WTC11 (cell line): ENCODE measurements at regions of chr18 and their contacts with region 1.

Region 1: DNA sequence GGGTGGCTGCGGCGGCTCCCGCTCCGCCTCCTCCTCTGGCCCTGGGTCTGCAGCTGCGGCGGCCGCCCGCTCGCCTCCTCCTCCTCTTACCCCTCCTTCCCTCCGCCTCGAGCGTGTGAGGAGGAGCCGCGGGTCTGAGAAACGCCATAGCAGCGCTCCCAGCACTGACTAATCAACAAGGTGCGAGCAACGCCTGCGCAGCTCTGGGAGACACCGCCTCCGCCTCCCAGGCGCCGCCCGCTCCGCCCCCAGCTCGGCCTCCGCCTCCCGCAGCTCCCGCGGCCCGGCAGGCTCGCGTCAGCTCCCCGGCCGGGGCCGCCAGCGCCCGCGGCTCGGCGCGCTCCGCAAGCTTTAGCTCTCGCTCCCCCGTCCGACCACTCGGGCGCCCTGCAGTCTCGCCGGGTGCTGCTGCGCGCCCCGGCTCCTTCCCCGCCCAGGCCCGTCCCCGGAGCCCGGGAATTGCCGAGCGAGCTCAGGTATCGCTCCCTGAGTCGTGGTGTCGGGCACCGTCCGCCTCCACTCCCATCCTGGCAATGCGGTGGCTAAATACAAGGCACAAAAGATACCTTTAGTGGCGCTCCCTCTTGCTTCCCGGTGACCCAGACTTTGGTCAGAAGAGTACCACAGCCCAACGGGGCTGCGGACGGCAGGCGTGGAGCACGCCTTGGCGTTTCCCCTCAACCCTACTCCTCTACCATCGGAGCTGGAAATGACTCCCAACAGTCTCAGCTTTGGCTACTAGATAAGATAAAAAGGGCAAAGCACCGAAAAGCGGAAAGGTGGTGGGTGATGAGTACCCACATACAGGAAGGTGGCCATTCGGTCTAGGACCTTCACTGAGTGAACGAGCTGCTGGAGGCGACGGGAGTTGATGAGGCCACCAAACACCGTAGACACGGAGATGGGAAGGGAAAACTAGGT is at the start of gene GAREM1:
- DNase-seq: peak; percentile 91
- ATAC-seq: peak; percentile 89
- H3K4me3 Mint-ChIP-seq: peak within 1 kb of the TSS; percentile 93
- H3K27ac Mint-ChIP-seq: peak within 1 kb of the TSS; percentile 89
- H3K4me1 Mint-ChIP-seq: peaks cover 30% of the 10 kb centered on the region
- H3K27me3 Mint-ChIP-seq: peaks cover 29% of the 10 kb centered on the region
- CTCF ChIP-seq: no peak
- total RNA-seq, gene GAREM1: 7.0 to 7.7 TPM (median 7.4 TPM) in 3 replicates

Region 2: DNA sequence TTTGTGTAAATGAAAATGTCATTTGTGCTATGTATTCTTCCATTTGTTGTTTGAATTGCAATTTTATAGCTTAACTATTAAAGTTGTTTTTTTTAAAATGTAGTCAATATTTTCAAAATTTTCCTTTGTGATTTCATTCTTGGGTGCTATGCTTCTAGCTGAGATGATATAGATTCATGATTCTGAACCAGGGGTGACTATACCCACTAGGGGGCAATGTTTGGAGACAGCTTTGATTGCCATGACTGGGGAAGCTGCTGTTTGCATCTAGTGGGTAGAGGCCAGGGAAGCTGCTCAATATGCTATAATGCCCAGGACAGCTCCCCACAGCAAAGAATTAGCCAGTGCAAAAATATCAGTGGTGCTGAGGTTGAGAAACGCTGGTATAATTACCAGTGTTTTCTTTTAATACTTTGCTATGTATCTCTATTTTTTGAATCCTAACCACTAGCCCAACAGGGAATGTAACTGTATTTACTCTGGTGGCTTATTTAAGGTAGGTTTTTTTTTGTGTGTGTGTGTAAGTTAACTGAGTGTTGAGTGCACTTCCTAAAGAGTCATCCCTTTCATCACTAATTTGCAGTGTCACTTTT is 181.4 kb before region 1 on chr18:
- CTCF ChIA-PET with region 1: interaction called, 60 read pairs
- POLR2A ChIA-PET with region 1: interaction called, 7 read pairs
- DNase-seq: peak; percentile 59
- ATAC-seq: peak; percentile 89
- H3K4me3 Mint-ChIP-seq: no peak overlapping the region
- H3K27ac Mint-ChIP-seq: no peak overlapping the region
- H3K4me1 Mint-ChIP-seq: peaks cover 8% of the 10 kb centered on the region
- H3K27me3 Mint-ChIP-seq: no peaks in the 10 kb centered on the region
- CTCF ChIP-seq: peak; percentile 49; the same call in 1 of the 2 replicates

Region 3: DNA sequence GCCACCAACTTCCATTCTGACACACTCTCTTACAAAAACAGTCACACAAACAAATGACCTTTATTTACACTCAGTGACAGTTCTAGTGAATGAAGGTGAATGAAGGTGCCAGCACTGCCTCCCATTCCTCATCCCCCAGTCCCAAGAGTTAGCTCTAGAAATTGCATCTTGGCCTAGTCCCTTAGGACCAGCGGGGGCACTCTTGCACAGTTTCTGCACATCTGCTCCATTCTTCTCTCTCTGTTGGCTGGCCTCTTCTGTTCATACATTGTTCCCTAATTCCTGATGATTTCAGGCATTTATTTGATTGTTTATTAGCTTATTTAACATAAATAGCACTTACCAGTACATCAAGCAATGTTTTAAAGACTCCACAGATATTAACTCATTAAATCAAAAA is 31.2 kb before region 1 on chr18:
- CTCF ChIA-PET with region 1: interaction called, 22 read pairs
- POLR2A ChIA-PET with region 1: interaction called, 6 read pairs
- DNase-seq: peak; percentile 48
- ATAC-seq: peak; percentile 94
- H3K4me3 Mint-ChIP-seq: no peak overlapping the region
- H3K27ac Mint-ChIP-seq: no peak overlapping the region
- H3K4me1 Mint-ChIP-seq: peaks cover 7% of the 10 kb centered on the region; the same call in 1 of the 2 replicates
- H3K27me3 Mint-ChIP-seq: no peaks in the 10 kb centered on the region
- CTCF ChIP-seq: no peak